IMR-90 (cell line): ENCODE measurements at regions of chr6 and their contacts with region 1.

Region 1: DNA sequence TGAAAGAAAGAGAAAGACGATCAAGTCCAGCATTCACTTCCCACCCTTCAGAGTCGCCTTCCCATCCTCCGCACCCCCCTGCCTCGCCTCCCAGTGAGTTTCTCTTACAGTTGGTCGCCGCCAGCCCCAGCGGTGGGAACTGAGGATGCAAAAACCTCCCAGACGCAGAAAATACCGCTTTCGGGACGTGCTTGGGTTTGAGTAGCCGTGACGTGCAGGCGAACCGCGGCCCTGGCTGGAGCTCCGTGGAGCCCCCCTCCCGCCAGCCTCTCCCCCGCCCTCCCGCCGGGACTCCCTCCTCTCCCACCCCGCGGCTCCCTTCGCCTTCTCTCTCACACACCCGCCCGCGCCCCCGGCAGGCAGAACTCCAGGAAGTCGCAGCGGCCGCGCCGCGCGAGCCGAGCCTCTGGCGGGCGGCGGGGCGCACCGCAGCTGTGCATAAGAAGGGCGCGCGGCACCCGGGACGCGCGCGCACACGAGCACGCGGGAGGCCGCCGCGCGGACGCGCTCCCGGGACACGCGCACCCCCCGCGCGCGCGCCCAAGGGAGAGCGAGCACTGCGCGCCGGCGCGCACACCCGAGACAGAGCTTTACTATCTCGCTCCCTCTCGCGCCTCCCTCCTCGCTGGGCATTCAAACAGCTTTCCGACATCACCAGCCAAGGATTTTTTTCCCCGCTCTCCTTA is at the start of gene ADGRB3:
- DNase-seq: peak; percentile 47
- ATAC-seq: peak; percentile 88
- H3K4me3 ChIP-seq: peak within 1 kb of the TSS; percentile 72
- H3K27ac ChIP-seq: no peak within 1 kb of the TSS
- H3K4me1 ChIP-seq: no peaks in the 10 kb centered on the region
- H3K27me3 ChIP-seq: peaks cover 5% of the 10 kb centered on the region
- CTCF ChIP-seq: no peak
- POLR2A ChIP-seq: no peak
- RAD21 ChIP-seq: no peak
- total RNA-seq, gene ADGRB3: not detected in 2 replicates

Region 2: DNA sequence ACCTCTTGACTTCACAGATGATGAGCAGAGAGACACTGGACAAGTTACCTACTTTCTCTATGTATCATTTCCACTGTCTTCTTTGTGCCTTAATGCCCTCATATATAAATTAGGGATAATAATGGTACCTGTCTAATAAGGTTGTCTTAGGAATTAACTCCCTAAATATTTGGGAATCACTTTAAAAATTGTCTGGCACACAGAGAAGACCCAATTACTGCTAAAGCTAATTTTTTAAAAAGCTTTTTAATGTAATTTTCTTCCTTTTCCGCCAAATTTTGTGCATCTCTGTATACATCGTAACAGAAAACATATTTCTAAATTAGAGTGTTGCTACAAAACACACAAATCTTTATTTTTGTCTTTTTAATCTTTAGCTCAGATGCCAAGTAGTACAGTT is 816.5 kb before region 1 on chr6:
- CTCF ChIA-PET with region 1: no interaction called
- POLR2A ChIA-PET with region 1: no interaction called
- dilution Hi-C with region 1: no loop called
- in situ Hi-C with region 1: no loop called
- intact Hi-C with region 1: loop called (anchors 5 kb)
- DNase-seq: no peak
- ATAC-seq: no peak
- H3K4me3 ChIP-seq: no peak overlapping the region
- H3K27ac ChIP-seq: no peak overlapping the region
- H3K4me1 ChIP-seq: no peaks in the 10 kb centered on the region
- H3K27me3 ChIP-seq: no peaks in the 10 kb centered on the region
- CTCF ChIP-seq: no peak
- POLR2A ChIP-seq: no peak
- RAD21 ChIP-seq: no peak

Region 3: GRCh38 chr6:68653074-68653705 is 18.3 kb after region 1 on chr6:
- CTCF ChIA-PET with region 1: no interaction called
- POLR2A ChIA-PET with region 1: no interaction called
- dilution Hi-C with region 1: no loop called
- in situ Hi-C with region 1: no loop called
- intact Hi-C with region 1: no loop called
- DNase-seq: no peak
- ATAC-seq: no peak
- H3K4me3 ChIP-seq: no peak overlapping the region
- H3K27ac ChIP-seq: no peak overlapping the region
- H3K4me1 ChIP-seq: no peaks in the 10 kb centered on the region
- H3K27me3 ChIP-seq: no peaks in the 10 kb centered on the region
- CTCF ChIP-seq: no peak
- POLR2A ChIP-seq: no peak
- RAD21 ChIP-seq: no peak

Region 4: GRCh38 chr6:68967549-68968300 is 332.9 kb after region 1 on chr6:
- CTCF ChIA-PET with region 1: no interaction called
- POLR2A ChIA-PET with region 1: no interaction called
- dilution Hi-C with region 1: no loop called
- in situ Hi-C with region 1: loop called (anchors 25 kb)
- intact Hi-C with region 1: loop called (anchors 5 kb)
- DNase-seq: peak; percentile 29
- ATAC-seq: peak; percentile 72; the same call in 1 of the 2 replicates
- H3K4me3 ChIP-seq: no peak overlapping the region
- H3K27ac ChIP-seq: no peak overlapping the region
- H3K4me1 ChIP-seq: no peaks in the 10 kb centered on the region
- H3K27me3 ChIP-seq: no peaks in the 10 kb centered on the region
- CTCF ChIP-seq: peak; percentile 81
- POLR2A ChIP-seq: no peak
- RAD21 ChIP-seq: peak; percentile 49

Region 5: DNA sequence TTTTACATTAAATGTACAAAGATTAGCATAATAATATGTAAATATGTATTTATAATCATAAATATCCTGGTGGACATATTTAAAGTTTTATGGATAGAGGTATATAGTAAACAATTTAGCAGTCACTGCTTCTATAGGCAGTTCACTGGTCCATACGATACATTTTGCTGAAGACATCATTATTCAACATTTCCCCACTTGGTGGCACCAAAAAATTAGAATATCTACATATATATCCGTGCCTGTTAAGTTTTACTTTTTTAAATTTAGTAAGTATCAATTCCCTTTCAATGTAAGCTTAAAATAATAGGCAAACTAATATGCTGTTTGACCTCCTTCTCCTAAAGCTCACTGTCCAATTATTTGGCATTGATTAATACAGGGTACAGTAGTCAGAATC is 1097.8 kb after region 1 on chr6:
- CTCF ChIA-PET with region 1: no interaction called
- POLR2A ChIA-PET with region 1: no interaction called
- dilution Hi-C with region 1: no loop called
- in situ Hi-C with region 1: no loop called
- intact Hi-C with region 1: loop called (anchors 10 kb)
- DNase-seq: no peak
- ATAC-seq: peak; percentile 74; the same call in 1 of the 2 replicates
- H3K4me3 ChIP-seq: no peak overlapping the region
- H3K27ac ChIP-seq: no peak overlapping the region
- H3K4me1 ChIP-seq: no peaks in the 10 kb centered on the region
- H3K27me3 ChIP-seq: no peaks in the 10 kb centered on the region
- CTCF ChIP-seq: 0 out of 2 replicates have a peak, but pooled peaks have one; percentile 23
- POLR2A ChIP-seq: no peak
- RAD21 ChIP-seq: 0 out of 2 replicates have a peak, but pooled peaks have one; percentile 5

Region 6: DNA sequence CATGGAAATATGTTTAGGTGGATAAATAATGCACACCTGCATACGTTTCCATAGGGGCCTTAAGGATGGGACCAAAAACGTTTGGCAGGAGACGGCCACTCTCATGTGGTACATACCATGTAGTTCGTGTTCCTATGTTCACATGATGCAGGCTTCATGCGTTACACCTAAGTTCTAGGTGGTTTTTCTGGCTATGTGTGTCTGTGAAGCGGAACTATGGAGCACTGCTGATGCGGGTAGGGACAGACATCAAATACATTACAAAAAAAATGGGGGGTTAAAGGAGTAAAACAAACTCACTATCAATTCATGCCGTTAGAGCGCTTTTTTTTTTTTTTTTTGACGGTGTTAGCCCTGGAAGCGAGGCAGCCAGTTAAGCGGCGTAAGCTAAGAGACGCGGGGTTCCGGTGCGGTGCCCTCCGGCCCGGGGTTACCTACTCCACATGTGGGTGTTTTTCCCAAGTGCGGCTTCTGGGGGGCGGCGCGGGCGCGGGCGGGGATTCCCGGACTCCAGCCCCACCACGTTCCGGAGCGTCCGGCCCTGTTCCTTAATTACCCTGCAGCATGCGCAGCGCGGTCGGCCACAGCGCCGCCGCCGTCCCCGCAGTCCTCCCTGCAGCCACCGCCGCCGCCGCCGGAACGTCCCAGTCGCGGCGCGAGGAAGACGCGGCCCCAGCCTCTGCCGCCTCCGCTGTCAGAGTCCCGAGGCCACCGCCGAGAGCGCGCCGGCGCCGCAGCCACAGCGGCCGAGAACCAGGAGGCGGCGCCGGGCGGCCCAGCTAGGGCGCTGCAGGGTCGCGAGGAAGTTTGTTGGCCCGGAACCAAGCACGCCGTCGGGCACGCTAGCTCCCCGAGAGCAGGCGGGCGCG is 1232.1 kb after region 1 on chr6:
- CTCF ChIA-PET with region 1: no interaction called
- POLR2A ChIA-PET with region 1: interaction called, 13 read pairs
- dilution Hi-C with region 1: no loop called
- in situ Hi-C with region 1: no loop called
- intact Hi-C with region 1: no loop called
- DNase-seq: peak; percentile 0
- ATAC-seq: peak; percentile 87
- H3K4me3 ChIP-seq: peak overlapping the region; percentile 55
- H3K27ac ChIP-seq: no peak overlapping the region
- H3K4me1 ChIP-seq: peaks cover 5% of the 10 kb centered on the region; the same call in 1 of the 2 replicates
- H3K27me3 ChIP-seq: peaks cover 31% of the 10 kb centered on the region
- CTCF ChIP-seq: no peak
- POLR2A ChIP-seq: no peak
- RAD21 ChIP-seq: no peak